CD8-positive, alpha-beta memory T cell (primary cell): ENCODE measurements at regions of chr19 and their contacts with region 1.

Region 1: DNA sequence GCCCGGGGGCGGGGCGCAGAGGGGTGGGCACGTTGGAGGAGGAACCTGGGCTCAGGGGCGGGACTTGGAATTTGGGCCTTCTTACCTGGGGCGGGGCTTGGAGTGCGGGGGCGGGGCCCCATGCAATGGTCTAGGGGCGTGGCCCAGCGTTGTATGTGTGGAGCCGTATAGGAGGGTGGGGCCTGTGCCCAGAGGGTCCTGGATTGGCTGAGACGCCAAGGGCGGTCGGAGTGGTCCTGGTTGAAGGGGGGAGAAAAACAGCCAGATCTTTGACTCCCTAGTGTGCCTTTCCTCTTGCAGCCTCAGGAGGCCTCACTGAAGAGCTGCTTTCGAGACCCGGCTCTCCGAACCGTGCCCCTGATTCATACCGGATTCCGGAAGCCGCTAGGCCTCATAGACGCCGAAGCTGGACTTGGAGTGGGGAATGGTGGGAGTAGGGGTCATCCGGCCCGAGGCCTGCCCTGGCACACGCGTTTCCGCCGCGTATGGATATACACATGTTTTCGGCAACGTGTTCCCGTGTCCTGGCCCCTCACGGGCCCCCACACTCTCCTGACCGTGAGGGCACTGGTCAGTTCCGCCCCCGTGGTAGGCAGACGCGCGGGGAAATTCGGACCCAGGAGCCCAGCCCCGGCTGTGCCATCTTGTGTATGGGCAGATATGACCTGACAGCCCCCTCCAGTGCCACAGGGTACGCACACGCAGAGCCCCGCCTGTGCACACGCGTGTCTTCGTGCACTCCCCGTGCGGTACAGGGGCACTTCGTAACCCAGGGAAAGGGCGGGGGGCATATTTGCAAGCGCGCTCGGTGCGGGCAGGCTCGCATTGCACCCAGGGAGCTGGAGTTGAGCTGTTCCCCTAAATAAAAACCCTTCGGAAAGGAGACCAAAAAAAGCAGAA is 661 bp upstream of the PRR12 start:
- DNase-seq: peak; percentile 91 to 98 (median 97)
- H3K4me3 ChIP-seq: peak overlapping the region; percentile 95
- H3K4me3 Mint-ChIP-seq: peak overlapping the region; percentile 85 to 96 (median 90)
- H3K27ac ChIP-seq: peak overlapping the region; percentile 88
- H3K27ac Mint-ChIP-seq: peak overlapping the region; percentile 77 to 95 (median 90)
- H3K4me1 ChIP-seq: peaks cover 26% of the 10 kb centered on the region
- H3K4me1 Mint-ChIP-seq: peaks cover 33 to 45% (median 34%) of the 10 kb centered on the region in 3 donors
- H3K27me3 ChIP-seq: no peaks in the 10 kb centered on the region
- H3K27me3 Mint-ChIP-seq: peaks cover 0 to 5% of the 10 kb centered on the region in 2 donors

Region 2: DNA sequence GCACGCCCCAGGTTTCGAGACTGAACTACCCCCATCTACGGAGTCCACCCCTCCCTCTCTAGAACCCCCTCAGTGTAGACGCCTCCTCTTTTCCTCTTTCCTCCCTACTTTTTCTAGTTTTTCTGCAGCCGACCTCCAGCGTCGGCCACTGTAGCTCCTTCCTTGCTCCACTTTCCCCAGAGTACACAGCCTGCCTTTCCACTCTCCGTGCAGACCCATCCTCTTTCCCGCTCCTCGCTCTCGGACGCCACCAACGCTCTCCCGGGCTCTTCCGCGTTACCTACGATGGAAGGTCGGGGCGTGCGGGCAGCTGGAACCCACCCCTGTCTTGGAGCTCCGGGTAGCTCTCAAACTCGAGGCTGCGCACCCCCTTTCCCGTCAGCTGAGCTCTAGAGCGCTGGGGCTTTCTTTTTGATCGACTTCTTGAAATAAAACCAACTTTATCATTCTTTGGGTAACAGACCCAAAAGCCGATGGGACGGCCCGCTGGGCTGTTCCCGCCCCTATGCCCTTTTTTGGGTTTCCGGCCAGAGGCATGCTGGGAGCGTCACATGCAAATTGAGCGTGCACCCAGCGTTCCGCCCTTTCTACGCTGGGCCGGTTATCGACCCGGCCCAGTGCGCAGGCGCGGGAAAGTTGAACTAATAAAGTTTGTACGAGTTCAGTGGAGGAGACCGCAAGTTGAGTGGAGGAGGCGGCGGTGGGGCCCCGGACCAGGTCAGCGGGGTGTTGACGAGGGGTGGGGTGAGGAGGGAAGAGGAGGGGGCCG is 75.2 kb after region 1 on chr19 and contains the starts of genes BCL2L12 and IRF3:
- CTCF ChIA-PET with region 1: interaction called, 3 read pairs
- POLR2A ChIA-PET with region 1: interaction called, 14 read pairs
- DNase-seq: peak; percentile 98 to 100 (median 100)
- H3K4me3 ChIP-seq: peak within 1 kb of the TSS; percentile 99
- H3K4me3 Mint-ChIP-seq: peak within 1 kb of the TSS; percentile 95 to 99 (median 97)
- H3K27ac ChIP-seq: peak within 1 kb of the TSS; percentile 77
- H3K27ac Mint-ChIP-seq: peak within 1 kb of the TSS; percentile 74 to 100 (median 98)
- H3K4me1 ChIP-seq: peaks cover 29% of the 10 kb centered on the region
- H3K4me1 Mint-ChIP-seq: peaks cover 28 to 44% (median 40%) of the 10 kb centered on the region in 3 donors
- H3K27me3 ChIP-seq: no peaks in the 10 kb centered on the region
- H3K27me3 Mint-ChIP-seq: no peaks in the 10 kb centered on the region
- total RNA-seq, gene BCL2L12: 68.2 to 70.9 TPM
- total RNA-seq, gene IRF3: 118 to 127 TPM